ENCODE measurements at regions of chr17 and their contacts with region 1.

Region 1: GRCh38 chr17:74790161-74791054 is 14.3 kb upstream of the NAT9 start:
- DNase-seq: no peak
- H3K4me3 ChIP-seq: no peak overlapping the region
- CTCF ChIP-seq: no peak

Region 2: DNA sequence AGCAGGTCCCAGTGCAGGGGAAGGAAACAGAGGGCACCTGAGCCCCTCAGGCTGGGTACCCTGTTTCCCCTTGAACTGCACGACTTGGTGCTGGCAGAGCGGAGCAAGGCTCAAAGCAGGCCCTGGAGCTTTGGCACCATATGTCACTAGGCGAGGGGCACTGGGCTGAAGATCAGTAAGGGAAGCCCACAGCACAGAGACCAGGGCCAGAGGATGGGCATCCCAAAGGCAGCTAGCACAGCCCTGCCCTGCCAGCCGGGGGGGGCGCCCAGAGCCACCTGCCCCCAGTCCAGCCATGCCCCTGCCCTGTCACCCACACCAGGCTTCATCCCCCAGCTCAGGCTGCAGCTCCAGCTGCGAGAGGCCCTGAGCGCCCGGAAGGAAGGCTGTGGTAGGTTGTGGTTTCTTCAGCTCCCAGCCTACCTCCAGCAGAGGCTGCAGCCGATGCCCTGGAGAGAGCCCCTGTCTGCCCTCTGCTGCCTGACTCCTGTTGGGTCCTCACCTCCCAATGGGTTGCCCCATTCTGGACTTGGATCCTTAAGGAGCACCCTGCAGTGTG is 31.1 kb before region 1 on chr17:
- CTCF ChIA-PET with region 1: interaction called, 18 read pairs
- POLR2A ChIA-PET with region 1: no interaction called
- DNase-seq: no peak
- H3K4me3 ChIP-seq: no peak overlapping the region
- CTCF ChIP-seq: no peak

Region 3: DNA sequence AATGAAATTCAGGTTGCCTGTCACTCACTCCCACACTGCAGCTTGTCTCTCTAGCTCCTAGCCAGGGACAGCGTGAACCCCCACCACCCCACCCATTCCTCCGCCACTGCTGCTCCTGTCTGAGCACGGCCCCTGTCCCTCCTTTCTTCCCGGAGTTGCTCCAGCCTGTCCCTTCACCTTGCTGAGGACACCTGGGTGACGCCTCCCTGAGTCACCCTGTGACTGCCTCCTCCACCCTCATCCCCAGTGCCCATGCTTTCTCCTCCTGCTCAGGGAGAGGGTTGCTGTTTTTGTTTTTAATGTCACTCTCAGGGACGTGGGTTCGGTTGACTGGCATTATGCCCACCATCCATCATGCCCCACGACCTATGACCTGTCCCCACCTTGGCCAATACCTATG is 11.5 kb after region 1 on chr17:
- CTCF ChIA-PET with region 1: interaction called, 100 read pairs
- POLR2A ChIA-PET with region 1: no interaction called
- DNase-seq: no peak
- H3K4me3 ChIP-seq: no peak overlapping the region
- CTCF ChIP-seq: no peak

Region 4: DNA sequence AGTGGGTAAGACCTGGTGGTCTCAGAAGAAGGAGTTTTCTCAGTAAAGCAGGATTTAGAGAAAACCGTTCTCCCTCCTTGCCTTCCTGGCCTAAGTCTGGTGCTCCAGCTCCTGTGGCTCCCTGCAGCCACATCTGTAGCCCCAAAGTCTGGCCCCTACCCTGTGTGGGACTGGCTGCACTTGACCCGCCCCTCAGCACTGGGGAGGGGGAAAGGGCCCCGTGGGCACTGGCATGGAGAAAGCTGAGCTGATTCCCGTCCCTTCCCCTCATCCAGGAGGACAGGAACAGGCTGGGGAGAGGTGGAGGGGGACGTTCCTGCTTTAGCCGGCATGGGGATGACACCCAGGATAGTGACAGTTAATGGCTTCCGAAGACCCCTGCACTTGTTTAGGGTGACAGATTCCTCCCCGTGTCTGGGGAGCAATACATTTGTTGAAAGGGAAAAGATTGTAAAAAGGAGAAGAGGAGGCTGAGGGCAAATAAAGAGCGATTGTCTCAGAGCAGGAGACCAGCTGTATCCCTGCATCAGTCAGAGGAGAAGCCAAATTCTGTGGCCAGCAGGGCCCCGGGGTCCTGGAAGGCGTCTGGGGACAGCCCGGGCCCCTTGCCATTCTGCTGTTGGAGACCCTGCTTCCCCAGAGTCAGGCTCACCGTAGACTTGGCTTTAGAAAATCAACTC is 31.4 kb after region 1 on chr17:
- CTCF ChIA-PET with region 1: interaction called, 27 read pairs
- POLR2A ChIA-PET with region 1: no interaction called
- DNase-seq: no peak
- H3K4me3 ChIP-seq: no peak overlapping the region
- CTCF ChIP-seq: no peak

Region 5: DNA sequence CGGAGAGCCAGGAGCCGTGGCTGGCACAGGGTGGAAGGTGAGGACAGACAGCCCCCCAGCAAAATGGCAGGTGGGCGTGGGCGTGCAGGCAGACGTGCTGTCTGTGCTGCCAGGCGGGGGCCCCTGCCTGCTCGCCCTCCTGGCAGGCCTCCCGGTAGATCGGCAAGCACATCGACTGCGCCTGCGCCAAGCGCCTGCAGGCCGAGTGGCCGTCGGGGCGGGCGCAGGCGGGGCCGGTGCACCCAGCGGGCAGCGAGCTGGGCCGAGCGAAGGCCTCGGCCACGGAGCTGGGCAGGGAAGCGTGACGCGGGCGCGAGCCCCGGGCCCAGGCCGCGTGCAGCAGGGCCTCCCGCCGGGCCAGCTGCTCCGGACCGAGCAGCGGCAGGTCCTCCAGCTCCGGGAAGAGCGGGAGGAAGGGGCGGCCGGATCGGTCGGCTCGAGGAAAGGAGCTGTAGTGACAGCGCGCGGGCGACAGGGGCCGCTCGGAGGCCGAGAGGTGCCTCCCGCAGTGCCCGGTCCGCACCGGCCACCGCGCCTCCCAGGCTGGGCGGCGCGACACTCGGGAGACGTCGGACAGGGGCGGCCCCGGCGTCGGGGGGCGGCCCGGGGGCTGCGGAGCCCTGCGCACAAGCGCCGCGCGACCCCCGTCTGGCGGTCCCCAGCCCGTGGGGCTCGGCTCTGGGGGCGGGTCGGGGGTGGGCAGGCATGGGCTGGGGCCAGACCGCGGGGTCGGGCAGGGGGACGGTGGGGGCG is 52.4 kb after region 1 on chr17:
- CTCF ChIA-PET with region 1: interaction called, 40 read pairs
- POLR2A ChIA-PET with region 1: no interaction called
- DNase-seq: no peak
- H3K4me3 ChIP-seq: peak overlapping the region; percentile 42
- CTCF ChIP-seq: peak; percentile 71